Heart left ventricle (tissue), 16 donors: ENCODE measurements at regions of chr12 and their contacts with region 1.

Region 1: GRCh38 chr12:108803428-108804105 is 53.8 kb downstream of the SSH1 start:
- DNase-seq: peak in 4 of 5 donors; percentile 78 to 82 (median 81)
- ATAC-seq: peak; percentile 69 to 79 (median 72)
- H3K4me3 ChIP-seq: peak overlapping the region in 4 of 12 donors; percentile 39 to 48 (median 40)
- H3K27ac ChIP-seq: peak overlapping the region; percentile 65 to 96 (median 88)
- H3K4me1 ChIP-seq: peaks cover 10 to 88% (median 59%) of the 10 kb centered on the region in 12 donors
- H3K27me3 ChIP-seq: no peaks in the 10 kb centered on the region
- CTCF ChIP-seq: peak; percentile 87 to 99 (median 97)
- POLR2A ChIP-seq: no peak

Region 2: DNA sequence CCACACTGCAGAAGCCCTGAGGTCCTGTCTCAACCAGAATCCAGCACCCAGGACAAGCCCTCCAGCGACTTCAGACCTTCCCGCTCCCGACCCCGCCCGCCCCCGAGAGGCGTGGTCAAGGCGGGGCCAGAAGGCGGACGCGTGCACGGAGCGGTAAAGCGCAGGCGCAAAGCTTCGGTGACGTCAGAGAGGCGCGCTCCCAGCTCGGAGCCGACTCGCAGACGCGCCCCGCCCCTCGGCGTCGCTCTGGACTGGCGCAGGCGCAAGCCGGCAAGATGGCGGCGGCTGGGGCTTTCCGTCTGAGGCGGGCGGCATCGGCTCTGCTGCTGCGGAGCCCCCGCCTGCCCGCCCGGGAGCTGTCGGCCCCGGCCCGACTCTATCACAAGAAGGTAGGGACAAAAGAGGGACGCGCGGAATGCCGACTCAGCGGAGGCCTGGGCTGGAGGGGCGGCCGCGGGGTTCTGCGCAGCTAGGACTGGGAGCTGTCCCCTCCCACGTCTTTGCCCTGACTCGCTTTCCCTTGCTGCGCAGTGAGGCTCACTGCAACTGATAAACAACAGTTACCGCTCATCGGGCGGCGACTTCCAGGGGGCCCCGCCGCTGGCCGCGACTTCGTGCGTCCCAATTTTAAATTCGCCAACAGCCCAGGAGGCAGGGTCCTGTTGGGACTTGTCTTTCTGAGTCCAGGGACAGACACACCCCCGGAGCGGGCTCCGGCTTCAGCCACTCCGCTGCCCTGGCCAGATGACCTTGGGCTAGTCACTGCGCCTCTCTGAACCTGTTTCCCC is 241.0 kb before region 1 on chr12 and contains the start of gene ISCU:
- intact Hi-C with region 1: loop called (anchors 1 to 10 kb)
- DNase-seq: peak; percentile 97 to 100 (median 98)
- ATAC-seq: peak; percentile 84 to 90 (median 88)
- H3K4me3 ChIP-seq: peak within 1 kb of the TSS; percentile 67 to 100 (median 89)
- H3K27ac ChIP-seq: peak within 1 kb of the TSS; percentile 84 to 98 (median 95)
- H3K4me1 ChIP-seq: peaks cover 7 to 81% (median 56%) of the 10 kb centered on the region in 12 donors
- H3K27me3 ChIP-seq: no peaks in the 10 kb centered on the region
- CTCF ChIP-seq: no peak
- POLR2A ChIP-seq: peak; percentile 86 to 98
- total RNA-seq, gene ISCU: 289 to 632 (median 497) TPM

Region 3: GRCh38 chr12:108618079-108618952 is 185.3 kb before region 1 on chr12:
- intact Hi-C with region 1: loop called in 1 of 10 experiments (anchors 5 kb)
- DNase-seq: peak; percentile 74 to 89 (median 80)
- ATAC-seq: peak; percentile 72 to 90 (median 80)
- H3K4me3 ChIP-seq: no peak overlapping the region
- H3K27ac ChIP-seq: peak overlapping the region in 1 of 12 donors; percentile 53
- H3K4me1 ChIP-seq: peaks cover 0 to 67% (median 13%) of the 10 kb centered on the region in 12 donors
- H3K27me3 ChIP-seq: no peaks in the 10 kb centered on the region
- CTCF ChIP-seq: peak; percentile 91 to 100 (median 98)
- POLR2A ChIP-seq: no peak

Region 4: GRCh38 chr12:108664338-108665258 is 139.0 kb before region 1 on chr12:
- intact Hi-C with region 1: loop called (anchors 1 to 2 kb)
- DNase-seq: peak; percentile 76 to 87 (median 84)
- ATAC-seq: peak; percentile 85 to 93 (median 92)
- H3K4me3 ChIP-seq: peak overlapping the region in 1 of 12 donors; percentile 12
- H3K27ac ChIP-seq: peak overlapping the region; percentile 62 to 88 (median 80)
- H3K4me1 ChIP-seq: peaks cover 17 to 60% (median 50%) of the 10 kb centered on the region in 12 donors
- H3K27me3 ChIP-seq: no peaks in the 10 kb centered on the region
- CTCF ChIP-seq: peak; percentile 88 to 98 (median 96)
- POLR2A ChIP-seq: peak in 1 of 2 donors; percentile 28

Region 5: DNA sequence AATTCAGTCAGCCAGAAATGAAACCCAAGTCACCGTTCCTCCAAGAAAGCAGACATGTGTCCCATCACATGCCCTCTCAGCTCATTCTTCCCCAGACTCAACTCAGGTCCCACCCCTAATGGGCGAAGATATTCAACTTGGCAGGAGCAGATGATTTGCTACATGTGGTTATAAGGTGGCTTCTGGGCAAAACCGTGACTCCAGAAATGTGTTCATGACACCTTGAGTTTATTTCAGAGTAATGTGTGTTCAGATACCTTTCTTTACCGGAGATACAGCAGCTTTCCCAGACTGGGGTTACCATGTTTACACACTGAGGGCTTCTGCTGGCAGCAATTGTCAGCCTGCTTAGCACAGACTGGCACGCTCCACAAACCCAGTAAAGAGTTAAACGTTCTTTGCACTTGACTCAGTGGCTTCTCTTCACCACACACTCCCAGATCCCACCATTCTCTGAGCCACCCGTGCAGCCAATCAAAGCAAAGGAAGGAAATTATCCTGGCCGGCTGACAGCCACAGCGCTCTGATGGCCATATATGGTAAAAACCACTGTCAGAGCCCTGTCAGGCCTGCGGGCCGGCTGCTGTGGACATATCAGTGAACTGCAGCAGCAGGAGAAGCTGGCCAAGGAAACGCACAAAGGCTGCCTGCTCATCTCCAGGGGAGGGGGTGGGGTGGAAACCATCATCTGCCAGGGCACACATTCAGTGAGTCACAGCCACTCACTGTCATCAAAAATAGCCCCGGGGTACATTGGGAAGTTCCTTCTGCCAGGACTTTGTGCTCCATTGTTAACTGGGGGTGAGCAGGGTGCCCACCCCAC is 112.2 kb before region 1 on chr12:
- intact Hi-C with region 1: loop called in 4 of 10 experiments (anchors 2 to 5 kb)
- DNase-seq: peak; percentile 94 to 98 (median 95)
- ATAC-seq: peak; percentile 91 to 97 (median 94)
- H3K4me3 ChIP-seq: peak overlapping the region in 9 of 12 donors; percentile 13 to 39 (median 30)
- H3K27ac ChIP-seq: peak overlapping the region; percentile 84 to 96 (median 94)
- H3K4me1 ChIP-seq: peaks cover 18 to 95% (median 72%) of the 10 kb centered on the region in 12 donors
- H3K27me3 ChIP-seq: no peaks in the 10 kb centered on the region
- CTCF ChIP-seq: peak in 11 of 12 donors; percentile 7 to 55 (median 37)
- POLR2A ChIP-seq: no peak

Region 6: DNA sequence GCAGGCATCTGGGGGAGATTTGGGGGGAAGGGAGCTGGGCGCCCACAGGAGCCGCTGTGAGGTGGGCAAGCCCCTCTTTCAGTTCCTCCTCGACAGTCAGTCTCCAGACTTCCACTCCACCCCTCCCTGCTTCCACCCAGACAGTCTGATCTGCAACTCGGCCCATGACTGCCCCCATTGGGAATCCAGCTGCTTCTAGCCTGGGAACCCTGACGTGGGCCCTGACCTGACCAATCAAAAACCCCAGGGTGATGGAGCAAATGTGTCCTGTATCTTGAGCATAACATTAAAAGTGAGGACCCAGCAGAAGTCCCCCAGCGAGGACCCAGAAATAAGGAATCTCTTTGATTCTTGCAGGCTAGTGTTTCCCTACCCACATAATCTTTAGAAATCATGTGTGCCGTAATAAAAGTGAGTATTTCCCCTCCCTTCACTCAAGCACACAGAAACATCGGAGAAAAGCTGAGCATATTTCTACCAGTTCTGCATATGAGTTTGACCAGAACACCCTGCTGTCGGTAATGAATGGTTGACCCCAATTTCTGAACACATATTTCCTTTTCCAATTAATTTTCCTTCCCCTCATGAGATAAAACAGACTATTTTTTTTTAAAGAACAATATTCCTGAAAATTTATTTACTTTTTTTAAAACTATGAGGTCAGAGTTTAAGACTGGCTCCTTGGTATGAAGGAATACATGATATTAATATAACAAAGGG is 47.4 kb after region 1 on chr12:
- intact Hi-C with region 1: loop called in 8 of 10 experiments (anchors 2 to 10 kb)
- DNase-seq: peak; percentile 77 to 88 (median 85)
- ATAC-seq: peak in 3 of 4 donors; percentile 45 to 67 (median 54)
- H3K4me3 ChIP-seq: peak overlapping the region in 3 of 12 donors; percentile 23 to 38 (median 37)
- H3K27ac ChIP-seq: peak overlapping the region in 11 of 12 donors; percentile 46 to 99 (median 96)
- H3K4me1 ChIP-seq: peaks cover 17 to 98% (median 85%) of the 10 kb centered on the region in 12 donors
- H3K27me3 ChIP-seq: no peaks in the 10 kb centered on the region
- CTCF ChIP-seq: peak in 5 of 12 donors; percentile 15 to 45 (median 24)
- POLR2A ChIP-seq: peak in 1 of 2 donors; percentile 17